Heart right ventricle (tissue), 16 donors: ENCODE measurements at regions of chr12 and their contacts with region 1.

Region 1: DNA sequence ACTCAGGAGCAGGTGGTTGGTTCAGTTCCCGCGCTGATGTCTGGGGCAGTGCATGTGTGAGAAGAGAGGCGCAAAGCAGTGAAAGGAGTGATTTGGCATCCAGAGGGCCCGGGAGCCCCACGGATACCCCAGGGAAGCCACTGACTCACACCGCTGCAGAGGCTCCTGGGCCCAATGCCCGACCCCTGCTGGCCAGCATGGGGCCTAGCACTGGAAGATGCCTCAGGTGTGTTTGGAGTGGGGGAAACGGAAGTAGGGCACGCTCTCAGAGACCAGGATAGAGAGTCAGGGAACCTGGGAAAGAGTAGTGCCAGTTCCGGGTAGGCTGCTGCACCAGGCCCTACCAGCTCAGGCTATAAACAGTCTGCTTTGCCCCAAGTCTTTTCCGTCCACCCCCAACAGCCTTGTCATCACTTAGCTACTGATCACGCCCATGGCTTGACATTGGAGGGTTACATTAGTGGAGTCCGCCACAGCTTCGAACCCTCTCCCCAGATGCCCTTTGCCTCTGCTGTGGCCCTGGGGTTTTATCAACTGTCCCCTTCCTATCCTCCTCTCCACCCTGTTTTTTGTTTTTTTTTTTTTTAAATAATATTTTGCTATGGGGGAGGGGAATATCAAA is 9.5 kb upstream of the CSAD start:
- DNase-seq: peak; percentile 37 to 61
- ATAC-seq: peak; percentile 21 to 88 (median 74)
- H3K4me3 ChIP-seq: no peak overlapping the region
- H3K27ac ChIP-seq: peak overlapping the region in 2 of 10 donors; percentile 12 to 46
- H3K4me1 ChIP-seq: peaks cover 0 to 16% (median 6%) of the 10 kb centered on the region in 9 donors
- H3K27me3 ChIP-seq: no peaks in the 10 kb centered on the region
- CTCF ChIP-seq: peak; percentile 40 to 78 (median 69)

Region 2: GRCh38 chr12:52821826-52822660 is 368.2 kb before region 1 on chr12:
- intact Hi-C with region 1: no loop called
- DNase-seq: no peak
- ATAC-seq: no peak
- H3K4me3 ChIP-seq: no peak overlapping the region
- H3K27ac ChIP-seq: no peak overlapping the region
- H3K4me1 ChIP-seq: no peaks in the 10 kb centered on the region
- H3K27me3 ChIP-seq: peaks cover 0 to 52% (median 29%) of the 10 kb centered on the region in 7 donors
- CTCF ChIP-seq: no peak

Region 3: DNA sequence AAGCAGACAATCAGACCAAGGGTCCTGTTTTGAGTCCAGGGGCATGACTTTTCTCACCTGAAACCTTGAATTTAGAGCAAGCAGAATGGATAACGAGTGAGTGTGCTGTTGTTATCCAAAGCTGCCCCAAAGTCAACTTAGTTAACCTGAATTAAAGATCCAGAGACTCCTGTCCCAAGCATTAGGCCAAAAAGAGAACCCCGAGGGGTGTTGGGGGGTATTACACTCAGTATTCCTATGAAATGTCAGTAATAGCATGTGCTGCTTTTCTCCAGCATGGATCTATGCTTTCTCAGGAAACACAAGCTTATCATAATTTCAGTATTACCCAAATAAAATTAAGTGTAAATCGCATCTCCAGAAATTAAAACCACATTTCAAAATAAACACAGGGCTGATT is 165.0 kb before region 1 on chr12:
- intact Hi-C with region 1: no loop called
- DNase-seq: no peak
- ATAC-seq: no peak
- H3K4me3 ChIP-seq: no peak overlapping the region
- H3K27ac ChIP-seq: no peak overlapping the region
- H3K4me1 ChIP-seq: no peaks in the 10 kb centered on the region
- H3K27me3 ChIP-seq: no peaks in the 10 kb centered on the region
- CTCF ChIP-seq: no peak

Region 4: DNA sequence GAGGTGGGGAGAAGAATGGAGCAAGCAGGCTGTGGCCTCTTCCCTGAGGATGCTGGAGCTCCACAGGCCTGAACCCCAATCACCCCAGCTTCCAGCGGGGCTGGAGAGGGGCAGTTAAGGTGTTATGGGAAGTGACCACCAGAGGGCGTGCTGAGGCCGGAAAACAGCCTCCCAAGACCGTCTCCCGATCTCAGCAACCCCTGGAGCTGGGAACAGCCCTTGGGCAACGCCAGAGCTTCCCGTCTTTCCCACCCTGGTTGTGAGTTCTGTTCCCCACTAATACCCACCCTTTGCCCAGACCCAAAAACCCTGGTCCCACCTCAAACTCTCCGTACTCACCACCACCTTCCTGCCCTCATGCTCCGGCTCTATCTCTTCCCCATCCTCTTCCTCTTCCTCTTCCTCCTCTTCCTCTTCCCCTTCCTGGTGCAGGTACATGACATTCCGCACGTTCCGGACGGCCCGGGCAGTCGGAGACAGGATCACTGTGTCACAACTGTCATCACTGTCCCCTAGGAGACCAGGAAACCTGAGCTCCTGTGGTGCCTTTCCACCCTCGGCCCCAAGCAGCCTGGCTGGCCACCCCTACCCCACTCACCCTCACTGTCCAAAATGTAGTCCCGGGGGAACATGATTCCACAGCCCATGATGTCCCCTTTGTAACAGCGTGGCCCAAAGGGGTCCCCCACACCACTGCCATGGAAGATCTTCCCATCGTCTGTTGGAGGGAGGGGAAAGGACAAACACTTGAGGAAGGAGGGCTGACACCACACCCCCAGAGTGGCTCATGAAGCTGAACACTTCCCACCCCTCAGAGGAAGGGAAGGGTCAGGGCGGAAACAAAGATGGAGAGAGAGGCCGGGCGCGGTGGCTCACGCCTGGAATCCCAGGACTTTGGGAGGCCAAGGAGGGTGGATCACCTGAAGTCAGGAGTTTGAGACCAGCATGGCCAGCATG is 124.0 kb before region 1 on chr12:
- intact Hi-C with region 1: loop called (anchors 2 to 10 kb)
- DNase-seq: peak; percentile 82 to 86
- ATAC-seq: peak; percentile 56 to 77 (median 66)
- H3K4me3 ChIP-seq: no peak overlapping the region
- H3K27ac ChIP-seq: peak overlapping the region in 9 of 10 donors; percentile 17 to 88 (median 78)
- H3K4me1 ChIP-seq: peaks cover 62 to 100% (median 87%) of the 10 kb centered on the region in 9 donors
- H3K27me3 ChIP-seq: no peaks in the 10 kb centered on the region
- CTCF ChIP-seq: peak; percentile 87 to 96 (median 90)

Region 5: DNA sequence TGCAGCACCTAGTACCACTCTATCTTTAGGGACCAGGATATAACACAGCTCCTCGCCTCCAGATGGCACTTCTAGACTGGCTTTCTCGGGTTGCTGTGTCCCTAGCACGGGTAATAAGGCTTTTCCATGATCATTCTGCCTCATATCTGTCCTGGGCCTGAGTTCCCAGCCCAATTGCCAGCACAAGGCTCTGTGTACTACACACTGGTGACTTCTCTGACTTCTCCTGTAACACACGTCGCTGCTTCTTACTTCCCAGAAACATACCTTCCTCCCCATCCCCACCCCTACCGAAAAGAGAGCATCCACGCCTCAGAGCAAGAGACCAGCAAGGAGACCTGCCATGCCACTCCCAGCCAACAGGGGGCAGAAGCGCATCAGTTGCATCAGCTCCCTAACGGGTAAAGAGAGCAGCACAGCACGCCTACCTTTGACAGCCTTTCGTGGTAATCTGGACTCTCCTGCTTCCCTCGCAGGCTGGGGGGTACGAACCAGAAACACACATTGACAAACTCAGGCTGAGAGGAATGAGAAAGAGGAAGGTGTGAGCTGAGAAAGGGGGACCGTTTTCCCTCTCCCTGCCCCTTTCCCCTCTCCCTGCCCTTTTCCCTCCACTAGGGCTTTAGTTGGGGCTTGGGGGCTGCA is 30.9 kb before region 1 on chr12:
- intact Hi-C with region 1: loop called in 3 of 10 experiments (anchors 2 to 5 kb)
- DNase-seq: peak; percentile 84
- ATAC-seq: peak; percentile 81 to 93 (median 84)
- H3K4me3 ChIP-seq: no peak overlapping the region
- H3K27ac ChIP-seq: no peak overlapping the region
- H3K4me1 ChIP-seq: peaks cover 0 to 7% (median 2%) of the 10 kb centered on the region in 9 donors
- H3K27me3 ChIP-seq: no peaks in the 10 kb centered on the region
- CTCF ChIP-seq: peak; percentile 89 to 97 (median 94)

Region 6: DNA sequence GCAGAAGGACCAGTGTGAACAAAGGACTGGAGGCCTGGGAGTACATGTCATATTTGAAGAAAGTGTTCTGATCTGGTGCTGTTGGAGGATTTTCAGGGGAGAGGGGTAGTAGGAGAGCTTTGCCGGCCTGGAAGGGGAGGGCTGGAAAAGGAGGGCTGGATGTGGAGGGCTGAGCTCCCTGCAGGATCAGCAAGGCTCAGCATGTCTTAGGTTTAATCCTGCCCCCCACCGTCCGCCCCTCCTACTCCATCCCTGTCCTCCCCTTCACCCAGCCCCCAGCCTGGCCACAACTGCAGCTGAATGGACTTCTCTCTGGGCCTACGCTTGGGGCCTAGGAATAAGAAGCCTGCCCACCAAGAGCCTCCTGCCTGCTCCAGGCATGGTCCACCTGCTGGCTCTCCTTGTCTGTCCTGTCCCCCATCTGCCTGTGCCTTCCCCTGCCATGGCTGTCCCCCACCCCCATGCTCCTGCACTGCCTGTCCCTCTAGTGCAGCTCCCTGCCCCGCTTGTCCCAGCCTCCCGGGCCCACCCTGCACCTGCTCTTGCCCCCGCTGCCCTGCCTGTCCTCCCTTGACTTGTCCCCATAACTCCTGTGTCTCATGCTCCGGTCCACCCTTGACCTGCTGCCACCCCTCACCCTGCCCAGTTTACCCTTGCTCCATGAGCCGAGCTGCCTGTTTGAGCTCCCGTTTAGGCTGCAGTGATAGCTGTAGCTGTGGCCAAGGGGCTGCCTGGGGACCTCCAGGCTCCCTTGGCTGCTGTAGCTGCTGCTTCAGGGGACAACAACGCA is 51.6 kb after region 1 on chr12:
- intact Hi-C with region 1: no loop called
- DNase-seq: no peak
- ATAC-seq: peak in 1 of 8 donors; percentile 31
- H3K4me3 ChIP-seq: no peak overlapping the region
- H3K27ac ChIP-seq: no peak overlapping the region
- H3K4me1 ChIP-seq: no peaks in the 10 kb centered on the region
- H3K27me3 ChIP-seq: peaks cover 0 to 15% (median 0%) of the 10 kb centered on the region in 7 donors
- CTCF ChIP-seq: no peak